ENCODE measurements at regions of chr12 and their contacts with region 1.

Region 1: DNA sequence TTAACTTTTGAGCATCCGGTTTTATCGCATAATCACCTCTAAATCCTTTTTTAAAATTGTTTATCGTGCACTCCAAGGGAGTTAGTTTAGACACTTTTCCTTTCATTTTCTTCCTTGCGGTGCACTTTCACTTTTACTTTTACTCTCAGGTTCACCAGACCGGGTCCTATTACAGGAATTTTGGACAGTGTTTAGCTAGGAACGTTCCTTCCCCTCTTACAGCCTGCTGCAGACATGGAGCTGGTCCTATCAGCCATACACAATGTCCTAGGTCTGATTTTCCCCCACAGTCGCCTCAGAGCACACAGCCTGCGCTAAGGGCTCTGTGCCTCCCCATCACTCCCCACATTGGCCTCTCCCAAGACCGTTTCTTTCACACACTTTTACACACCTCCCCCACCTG is 103.9 kb downstream of the ALG10 start:
- DNase-seq: no peak
- H3K4me3 ChIP-seq: peak overlapping the region in 1 of 4 donors; percentile 21
- H3K27ac ChIP-seq: no peak overlapping the region
- H3K4me1 ChIP-seq: no peaks in the 10 kb centered on the region
- H3K27me3 ChIP-seq: no peaks in the 10 kb centered on the region
- CTCF ChIP-seq: no peak
- POLR2A ChIP-seq: no peak

Region 2: DNA sequence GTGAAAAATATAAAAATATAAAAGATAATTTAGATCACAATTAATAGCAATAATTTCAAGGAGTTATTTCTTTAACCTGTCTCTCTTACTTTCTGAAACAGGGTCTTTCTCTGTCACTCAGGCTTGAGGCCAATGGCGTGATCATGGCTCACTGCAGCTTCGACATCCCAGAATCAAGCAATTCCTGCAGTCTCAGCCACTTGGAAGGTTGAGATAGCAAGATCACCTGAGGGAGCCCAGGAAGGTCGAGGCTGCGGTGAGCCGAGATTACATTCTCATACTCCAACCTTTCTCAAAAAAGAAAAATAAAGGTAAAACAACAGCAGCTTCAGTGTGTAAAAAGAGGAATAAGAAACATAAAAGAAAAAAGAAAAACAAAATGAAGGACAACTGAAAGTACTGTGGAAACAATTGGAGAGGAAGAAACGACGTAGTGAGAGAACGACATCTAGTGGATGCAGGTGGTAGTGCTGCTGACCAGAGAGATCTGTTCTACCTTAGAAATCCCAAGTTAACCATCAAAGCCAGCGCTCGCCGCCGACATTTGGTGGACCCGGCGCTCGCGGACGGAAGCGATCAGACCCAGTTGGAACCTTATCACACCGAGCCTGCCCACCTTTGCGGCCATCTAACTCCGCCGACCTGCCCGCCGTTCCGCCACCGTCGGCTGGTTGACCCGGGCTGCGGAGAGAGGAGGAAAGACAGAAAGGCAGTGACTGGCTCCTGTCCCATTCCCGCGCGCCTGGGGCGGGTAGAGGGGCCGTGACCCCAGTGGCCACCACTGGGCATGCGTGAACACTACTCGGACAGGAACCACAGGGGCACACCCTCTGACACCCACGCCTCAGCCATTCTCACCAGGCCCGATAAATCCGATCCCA is 92.2 kb after region 1 on chr12:
- intact Hi-C with region 1: loop called (anchors 2 to 10 kb)
- DNase-seq: peak; percentile 59 to 91 (median 81)
- H3K4me3 ChIP-seq: peak overlapping the region in 1 of 4 donors; percentile 32
- H3K27ac ChIP-seq: no peak overlapping the region
- H3K4me1 ChIP-seq: peaks cover 0 to 9% of the 10 kb centered on the region in 2 donors
- H3K27me3 ChIP-seq: peaks cover 7% of the 10 kb centered on the region
- CTCF ChIP-seq: peak; percentile 85 to 98 (median 94)
- POLR2A ChIP-seq: no peak

Region 3: GRCh38 chr12:34311337-34311736 is 185.1 kb after region 1 on chr12:
- intact Hi-C with region 1: no loop called
- DNase-seq: no peak
- H3K4me3 ChIP-seq: no peak overlapping the region
- H3K27ac ChIP-seq: no peak overlapping the region
- H3K4me1 ChIP-seq: no peaks in the 10 kb centered on the region
- H3K27me3 ChIP-seq: no peaks in the 10 kb centered on the region
- CTCF ChIP-seq: no peak
- POLR2A ChIP-seq: no peak

Region 4: DNA sequence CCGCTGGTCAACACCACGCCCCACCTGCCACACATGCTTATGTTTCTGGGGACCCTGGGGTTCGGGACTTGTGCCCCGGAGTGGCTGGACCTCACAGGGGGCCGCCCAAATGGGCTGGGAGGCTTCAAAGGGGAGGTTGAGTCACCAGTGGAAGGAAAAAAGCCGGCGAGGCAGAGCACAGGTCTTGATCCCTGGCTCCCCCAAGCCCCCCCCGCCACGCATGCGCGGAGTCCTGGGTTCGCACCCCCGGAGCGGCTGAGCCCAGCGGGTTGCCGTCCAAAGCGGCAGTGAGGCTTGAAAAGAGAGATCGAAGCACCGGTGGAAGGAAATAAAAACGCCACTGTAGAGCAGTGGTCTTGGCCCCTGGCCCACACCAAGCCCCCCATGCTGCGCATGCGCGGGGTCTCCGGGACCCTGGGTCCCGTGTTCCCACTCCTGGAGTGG is 209.6 kb after region 1 on chr12:
- intact Hi-C with region 1: no loop called
- DNase-seq: no peak
- H3K4me3 ChIP-seq: no peak overlapping the region
- H3K27ac ChIP-seq: no peak overlapping the region
- H3K4me1 ChIP-seq: no peaks in the 10 kb centered on the region
- H3K27me3 ChIP-seq: peaks cover 15% of the 10 kb centered on the region
- CTCF ChIP-seq: no peak
- POLR2A ChIP-seq: no peak